ENCODE measurements at regions of chr17 and their contacts with region 1.

Region 1: GRCh38 chr17:47675380-47676198 is 18.4 kb upstream of the TBKBP1 start:
- DNase-seq: no peak
- H3K4me3 ChIP-seq: no peak overlapping the region
- H3K27me3 ChIP-seq: no peaks in the 10 kb centered on the region
- CTCF ChIP-seq: no peak

Region 2: DNA sequence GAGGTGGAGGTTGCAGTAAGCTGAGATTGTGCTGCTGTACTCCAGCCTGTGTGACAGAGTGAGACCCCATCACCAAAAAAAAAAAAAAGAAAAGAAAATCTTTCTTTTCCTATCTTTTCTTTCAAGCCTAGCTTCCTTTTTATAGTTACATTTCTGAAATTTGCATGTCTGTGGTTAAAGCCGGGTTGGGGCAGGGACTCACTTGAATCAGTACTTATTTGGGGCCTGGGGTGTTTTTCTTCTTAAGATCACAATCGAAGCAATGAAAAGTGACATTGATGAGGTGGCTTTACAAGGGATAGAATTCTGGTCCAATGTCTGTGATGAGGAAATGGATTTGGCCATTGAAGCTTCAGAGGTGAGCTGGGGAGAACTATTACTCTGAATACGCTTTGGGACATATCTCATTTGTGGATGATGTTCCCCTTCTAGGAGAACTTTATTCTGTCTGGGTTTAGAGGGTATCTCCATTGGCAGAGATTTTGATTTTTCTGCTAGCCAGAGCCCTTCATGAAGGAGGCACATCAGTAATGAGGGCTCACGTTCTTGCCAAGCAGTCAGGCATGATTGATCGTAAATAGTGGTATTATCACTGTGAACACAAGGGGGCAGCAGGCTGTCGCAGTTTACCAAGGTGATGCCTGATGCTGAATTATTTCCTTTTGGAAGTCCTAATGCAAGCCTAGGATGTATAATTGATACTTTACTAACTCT is 11.5 kb before region 1 on chr17:
- CTCF ChIA-PET with region 1: interaction called, 34 read pairs
- POLR2A ChIA-PET with region 1: no interaction called
- DNase-seq: no peak
- H3K4me3 ChIP-seq: no peak overlapping the region
- H3K27me3 ChIP-seq: no peaks in the 10 kb centered on the region
- CTCF ChIP-seq: peak; percentile 81

Region 3: GRCh38 chr17:47941236-47941994 is 265.8 kb after region 1 on chr17 and contains the start of gene PNPO:
- CTCF ChIA-PET with region 1: no interaction called
- POLR2A ChIA-PET with region 1: no interaction called
- DNase-seq: peak; percentile 93
- H3K4me3 ChIP-seq: peak within 1 kb of the TSS; percentile 87
- H3K27me3 ChIP-seq: no peaks in the 10 kb centered on the region
- CTCF ChIP-seq: 0 out of 2 replicates have a peak, but pooled peaks have one; percentile 7
- polyA plus RNA-seq, gene PNPO: 15.9 and 19.6 TPM in 2 replicates

Measured in BJ (cell line).